Activated CD4-positive, alpha-beta memory T cell treated with anti-CD3 and anti-CD28 coated beads for 36 hours (primary cell): ENCODE measurements at regions of chr20 and their contacts with region 1.

Region 1: DNA sequence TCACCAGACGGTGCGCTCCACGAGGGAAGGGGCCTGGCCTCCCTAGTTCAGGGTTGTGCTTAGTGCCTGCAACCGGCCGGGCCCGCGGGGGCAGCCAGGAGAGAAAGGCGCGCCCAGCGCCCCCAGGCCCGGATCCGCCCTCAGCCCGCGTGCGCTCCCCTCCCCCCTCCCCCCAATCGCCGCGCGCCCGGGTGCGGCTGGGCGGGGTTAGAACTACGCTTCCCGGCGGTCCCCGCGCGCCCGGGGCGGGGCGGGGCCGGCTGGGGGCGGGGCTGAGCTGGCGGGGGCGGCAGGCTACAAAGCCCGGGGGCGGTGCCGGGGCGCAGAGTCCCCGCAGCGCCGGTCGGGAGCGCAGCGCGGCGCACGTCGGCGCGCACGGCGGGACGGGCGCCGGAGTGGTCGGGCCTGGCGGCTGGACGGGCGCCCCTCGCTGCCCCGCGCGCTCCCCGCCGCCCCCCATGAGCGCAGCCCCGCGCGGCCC is at the start of gene RBM38:
- DNase-seq: peak; percentile 85
- H3K4me3 Mint-ChIP-seq: peak within 1 kb of the TSS; percentile 95
- H3K27ac Mint-ChIP-seq: peak within 1 kb of the TSS; percentile 97
- H3K4me1 Mint-ChIP-seq: peaks cover 40% of the 10 kb centered on the region
- H3K27me3 Mint-ChIP-seq: no peaks in the 10 kb centered on the region
- total RNA-seq, gene RBM38: 73.4 to 77.3 TPM

Region 2: DNA sequence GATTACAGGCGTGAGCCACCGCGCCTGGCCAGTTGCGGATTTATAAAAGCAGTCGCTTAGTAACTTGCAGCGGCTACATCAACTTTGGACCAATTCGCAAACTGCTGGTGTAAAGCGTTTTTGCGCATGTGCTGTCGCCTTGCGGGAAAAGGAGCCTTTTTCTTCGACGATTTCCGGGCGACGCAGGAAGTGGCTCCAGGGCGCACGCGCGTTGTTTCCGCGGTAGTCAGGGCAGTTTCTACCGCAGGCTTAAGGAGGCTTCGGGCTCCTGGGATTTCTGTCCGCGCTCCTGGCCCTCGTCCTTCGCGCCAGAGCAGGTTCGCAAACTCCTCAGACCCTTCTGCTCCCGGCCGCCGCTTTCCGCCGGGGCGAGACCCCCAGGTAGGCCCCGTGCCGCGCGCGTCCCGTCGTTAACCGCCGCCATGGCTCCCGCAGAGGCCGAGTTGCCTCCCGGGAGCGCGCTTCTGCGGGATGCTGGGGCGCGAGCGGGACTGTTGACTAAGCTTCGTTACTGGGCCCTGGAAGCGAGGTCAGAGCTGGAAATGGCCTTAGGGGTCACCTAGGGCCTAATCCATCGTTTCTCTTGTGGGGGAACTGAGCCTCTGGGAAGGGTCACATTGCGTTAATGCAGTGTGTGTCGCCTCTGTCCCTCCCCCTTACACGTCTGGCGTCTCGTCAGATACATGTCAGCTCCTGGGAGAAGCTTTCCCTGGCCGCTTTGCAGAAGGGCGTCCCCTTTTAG is 39.9 kb before region 1 on chr20 and contains the start of gene RAE1:
- CTCF ChIA-PET with region 1: interaction called, 3 read pairs
- POLR2A ChIA-PET with region 1: interaction called, 22 read pairs
- intact Hi-C with region 1: loop called (anchors 2 kb)
- DNase-seq: peak; percentile 95
- H3K4me3 Mint-ChIP-seq: peak within 1 kb of the TSS; percentile 90
- H3K27ac Mint-ChIP-seq: peak within 1 kb of the TSS; percentile 85
- H3K4me1 Mint-ChIP-seq: peaks cover 23% of the 10 kb centered on the region
- H3K27me3 Mint-ChIP-seq: no peaks in the 10 kb centered on the region
- total RNA-seq, gene RAE1: 33.7 to 38.2 TPM

Region 3: DNA sequence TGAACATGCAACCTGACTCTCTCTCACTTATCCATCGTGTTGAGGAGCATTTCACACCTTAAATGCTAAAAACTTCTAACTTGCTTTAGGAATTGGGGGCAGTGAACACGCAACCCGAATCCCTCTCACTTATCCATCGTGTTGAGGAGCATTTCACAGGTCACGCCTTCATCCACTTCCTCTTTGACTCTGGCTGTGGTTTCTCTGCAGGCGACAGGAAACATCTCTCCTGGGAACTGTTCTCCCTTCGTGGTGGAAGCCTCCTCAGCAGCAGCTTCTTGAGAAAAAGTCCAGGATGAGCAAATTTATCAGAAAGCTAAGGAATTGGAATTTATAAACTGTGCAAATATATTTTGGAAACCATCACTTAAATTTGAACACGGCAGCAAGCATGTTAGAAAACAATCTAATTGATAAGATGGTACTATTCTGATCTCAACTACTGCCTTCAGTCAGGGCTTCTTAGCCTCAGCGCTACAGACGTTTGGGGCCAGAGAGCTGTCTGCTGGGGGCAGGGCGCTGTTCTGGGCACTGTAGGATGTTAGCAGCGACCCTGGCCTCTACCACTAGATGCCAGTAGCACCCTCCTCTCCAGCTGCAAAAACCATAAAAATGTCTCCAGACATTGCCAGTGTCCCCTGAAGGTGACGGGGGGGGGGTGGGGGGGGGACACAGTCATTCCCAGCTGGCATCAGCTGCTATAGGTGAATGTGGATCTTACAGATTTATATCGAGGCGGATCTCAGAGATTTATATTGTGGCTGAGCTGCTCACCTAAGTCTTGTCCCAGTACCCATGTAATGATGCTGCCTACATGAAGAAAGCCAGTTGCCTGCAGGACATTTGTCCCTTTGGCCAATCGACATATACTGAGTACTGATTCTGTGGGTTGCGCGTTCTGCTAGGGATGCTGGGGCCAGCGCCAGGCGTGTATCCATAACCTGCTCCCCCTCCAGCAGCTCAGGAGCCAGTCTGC is 107.6 kb after region 1 on chr20:
- CTCF ChIA-PET with region 1: interaction called, 11 read pairs
- POLR2A ChIA-PET with region 1: no interaction called
- intact Hi-C with region 1: no loop called
- DNase-seq: peak; percentile 63
- H3K4me3 Mint-ChIP-seq: no peak overlapping the region
- H3K27ac Mint-ChIP-seq: no peak overlapping the region
- H3K4me1 Mint-ChIP-seq: peaks cover 10% of the 10 kb centered on the region
- H3K27me3 Mint-ChIP-seq: peaks cover 26% of the 10 kb centered on the region

Region 4: DNA sequence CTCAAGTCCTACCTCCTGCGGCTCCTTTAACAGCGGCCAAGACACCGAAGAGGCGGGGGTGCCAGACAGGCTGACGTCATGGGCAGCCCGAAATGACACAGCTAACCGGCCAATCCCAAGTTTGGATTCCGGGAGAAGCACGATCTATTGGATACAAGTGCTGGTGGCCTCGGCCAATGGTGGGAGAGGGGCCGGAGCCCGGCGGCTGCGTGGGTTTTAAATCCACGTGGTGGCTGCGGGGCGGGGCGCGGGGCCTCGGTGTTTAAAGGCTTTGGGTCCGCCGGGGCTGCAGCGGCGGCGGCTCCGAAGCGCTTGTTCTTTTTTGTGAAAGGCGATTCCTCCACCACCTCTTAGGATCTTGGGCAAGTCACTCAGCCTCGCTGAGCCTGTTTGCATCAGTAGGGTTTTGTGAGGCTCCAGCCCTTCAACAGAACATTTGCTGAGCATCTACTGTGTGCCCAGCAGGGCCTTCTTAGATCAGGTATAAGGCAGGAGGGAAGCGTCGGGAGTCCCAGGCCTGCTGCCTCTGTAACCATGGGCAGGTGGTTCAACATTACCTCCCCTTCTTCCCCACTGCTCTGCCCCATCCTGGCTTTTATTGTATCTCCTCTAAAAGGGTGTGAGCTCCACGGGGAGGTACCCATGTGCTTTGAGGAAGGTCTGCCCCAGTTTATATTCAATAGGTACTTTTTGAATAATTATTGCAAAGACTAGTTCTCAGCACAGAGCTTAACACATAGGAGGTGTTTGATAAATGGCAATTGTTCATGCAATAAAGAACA is 327.6 kb after region 1 on chr20:
- CTCF ChIA-PET with region 1: no interaction called
- POLR2A ChIA-PET with region 1: no interaction called
- intact Hi-C with region 1: loop called (anchors 5 kb)
- DNase-seq: peak; percentile 96
- H3K4me3 Mint-ChIP-seq: peak overlapping the region; percentile 37
- H3K27ac Mint-ChIP-seq: no peak overlapping the region
- H3K4me1 Mint-ChIP-seq: peaks cover 9% of the 10 kb centered on the region
- H3K27me3 Mint-ChIP-seq: peaks cover 1% of the 10 kb centered on the region

Region 5: GRCh38 chr20:58888521-58889333 is 1497.6 kb after region 1 on chr20:
- CTCF ChIA-PET with region 1: no interaction called
- POLR2A ChIA-PET with region 1: no interaction called
- intact Hi-C with region 1: loop called (anchors 5 kb)
- DNase-seq: peak; percentile 88
- H3K4me3 Mint-ChIP-seq: peak overlapping the region; percentile 80
- H3K27ac Mint-ChIP-seq: peak overlapping the region; percentile 58
- H3K4me1 Mint-ChIP-seq: peaks cover 27% of the 10 kb centered on the region
- H3K27me3 Mint-ChIP-seq: no peaks in the 10 kb centered on the region